Mammary epithelial cell (primary cell): ENCODE measurements at regions of chr12 and their contacts with region 1.

Region 1: DNA sequence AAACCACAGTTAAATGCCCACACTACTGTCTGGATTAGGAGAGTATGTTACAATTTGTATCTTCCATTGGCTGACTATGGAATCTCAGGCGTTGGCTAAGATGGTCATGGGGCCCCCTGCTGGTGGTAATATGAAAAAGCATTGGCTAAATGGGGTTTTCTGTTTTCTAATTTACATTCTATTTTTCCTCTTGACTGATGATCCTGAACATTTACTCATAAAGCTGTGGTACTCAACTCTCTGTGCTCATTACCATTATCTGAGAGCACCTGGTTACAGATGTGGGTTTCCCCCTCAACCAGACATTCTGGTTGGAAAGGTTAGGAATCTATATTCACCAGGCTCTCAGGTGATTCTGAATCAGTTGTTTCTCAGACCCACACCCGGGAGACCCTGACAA is 64.8 kb downstream of the WSCD2 start:
- DNase-seq: no peak
- H3K4me3 ChIP-seq: no peak overlapping the region
- H3K27ac ChIP-seq: no peak overlapping the region
- H3K4me1 ChIP-seq: no peaks in the 10 kb centered on the region
- H3K27me3 ChIP-seq: no peaks in the 10 kb centered on the region
- CTCF ChIP-seq: peak; percentile 71 to 84

Region 2: GRCh38 chr12:107992870-107993451 is 201.0 kb before region 1 on chr12:
- CTCF ChIA-PET with region 1: no interaction called
- dilution Hi-C with region 1: no loop called
- in situ Hi-C with region 1: no loop called
- intact Hi-C with region 1: loop called (anchors 5 kb)
- DNase-seq: peak; percentile 54
- H3K4me3 ChIP-seq: no peak overlapping the region
- H3K27ac ChIP-seq: no peak overlapping the region
- H3K4me1 ChIP-seq: no peaks in the 10 kb centered on the region
- H3K27me3 ChIP-seq: no peaks in the 10 kb centered on the region
- CTCF ChIP-seq: peak; percentile 43 to 71

Region 3: DNA sequence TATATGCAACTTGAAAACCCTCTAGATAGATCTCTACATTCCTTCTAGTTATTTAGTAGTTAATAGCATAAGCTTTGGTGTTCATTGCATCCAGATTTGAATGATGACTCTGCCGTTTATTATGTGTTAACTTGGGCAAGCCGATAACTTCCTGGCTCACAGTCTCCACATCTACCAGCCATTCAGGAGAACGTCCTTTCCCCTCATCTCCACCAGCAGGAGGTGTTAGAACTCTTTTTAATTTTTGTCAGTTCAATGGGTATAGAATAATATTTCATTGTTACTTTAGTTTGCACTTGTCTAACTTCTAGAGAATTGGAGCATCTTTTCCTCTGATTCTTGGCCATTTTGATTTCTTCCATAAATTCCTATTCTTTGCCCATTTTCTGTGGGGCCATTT is 94.8 kb before region 1 on chr12:
- CTCF ChIA-PET with region 1: no interaction called
- dilution Hi-C with region 1: no loop called
- in situ Hi-C with region 1: no loop called
- intact Hi-C with region 1: loop called (anchors 1 kb)
- DNase-seq: no peak
- H3K4me3 ChIP-seq: no peak overlapping the region
- H3K27ac ChIP-seq: no peak overlapping the region
- H3K4me1 ChIP-seq: no peaks in the 10 kb centered on the region
- H3K27me3 ChIP-seq: no peaks in the 10 kb centered on the region
- CTCF ChIP-seq: peak; percentile 45 to 49

Region 4: GRCh38 chr12:108234158-108234557 is 40.2 kb after region 1 on chr12:
- CTCF ChIA-PET with region 1: no interaction called
- dilution Hi-C with region 1: loop called (anchors 5 kb)
- in situ Hi-C with region 1: no loop called
- intact Hi-C with region 1: no loop called
- DNase-seq: no peak
- H3K4me3 ChIP-seq: no peak overlapping the region
- H3K27ac ChIP-seq: no peak overlapping the region
- H3K4me1 ChIP-seq: no peaks in the 10 kb centered on the region
- H3K27me3 ChIP-seq: no peaks in the 10 kb centered on the region
- CTCF ChIP-seq: peak in 1 of 2 donors; percentile 31

Region 5: DNA sequence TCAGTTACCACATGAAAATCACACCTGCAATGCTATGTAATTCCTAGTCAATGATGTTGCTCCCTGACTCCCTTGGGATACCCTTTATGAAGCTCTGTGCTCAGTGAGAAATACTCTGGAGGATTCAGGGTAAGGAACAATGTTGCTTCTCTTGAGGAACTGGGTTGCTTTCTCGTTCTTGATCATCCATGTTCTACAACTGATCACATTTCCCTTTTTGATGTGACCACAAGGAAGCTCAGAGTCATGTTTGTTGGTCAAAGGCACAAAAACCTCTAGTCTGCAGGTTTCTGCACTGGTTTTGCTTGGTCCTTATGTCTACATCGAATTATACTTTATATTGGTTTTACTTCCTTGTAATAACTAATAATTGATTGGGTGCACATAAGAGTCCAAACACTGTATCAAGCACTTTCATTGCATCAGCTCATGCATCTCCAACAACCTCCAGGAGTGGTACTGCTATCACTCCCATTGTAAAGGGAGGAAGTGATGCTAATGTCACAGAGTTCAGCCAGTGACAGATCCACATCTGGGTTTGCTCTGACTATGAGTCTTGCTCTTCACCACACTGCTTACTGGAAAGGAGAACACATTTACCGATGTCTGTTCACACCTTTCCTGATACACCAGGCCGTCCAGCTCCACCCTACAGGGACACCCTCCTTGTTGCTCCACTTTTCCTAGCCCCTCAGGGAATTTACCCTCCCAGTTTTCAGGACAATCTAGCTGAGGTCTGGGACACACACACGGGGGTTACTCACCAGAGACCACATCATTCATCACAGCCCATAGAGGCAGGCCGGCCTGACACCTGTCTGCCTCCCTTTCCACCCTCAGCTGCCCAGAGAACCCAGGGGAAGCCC is 104.2 kb after region 1 on chr12:
- CTCF ChIA-PET with region 1: no interaction called
- dilution Hi-C with region 1: no loop called
- in situ Hi-C with region 1: no loop called
- intact Hi-C with region 1: no loop called
- DNase-seq: no peak
- H3K4me3 ChIP-seq: no peak overlapping the region
- H3K27ac ChIP-seq: no peak overlapping the region
- H3K4me1 ChIP-seq: peaks cover 3% of the 10 kb centered on the region
- H3K27me3 ChIP-seq: no peaks in the 10 kb centered on the region
- CTCF ChIP-seq: no peak